WTC11 (cell line): ENCODE measurements at regions of chr1 and their contacts with region 1.

Region 1: DNA sequence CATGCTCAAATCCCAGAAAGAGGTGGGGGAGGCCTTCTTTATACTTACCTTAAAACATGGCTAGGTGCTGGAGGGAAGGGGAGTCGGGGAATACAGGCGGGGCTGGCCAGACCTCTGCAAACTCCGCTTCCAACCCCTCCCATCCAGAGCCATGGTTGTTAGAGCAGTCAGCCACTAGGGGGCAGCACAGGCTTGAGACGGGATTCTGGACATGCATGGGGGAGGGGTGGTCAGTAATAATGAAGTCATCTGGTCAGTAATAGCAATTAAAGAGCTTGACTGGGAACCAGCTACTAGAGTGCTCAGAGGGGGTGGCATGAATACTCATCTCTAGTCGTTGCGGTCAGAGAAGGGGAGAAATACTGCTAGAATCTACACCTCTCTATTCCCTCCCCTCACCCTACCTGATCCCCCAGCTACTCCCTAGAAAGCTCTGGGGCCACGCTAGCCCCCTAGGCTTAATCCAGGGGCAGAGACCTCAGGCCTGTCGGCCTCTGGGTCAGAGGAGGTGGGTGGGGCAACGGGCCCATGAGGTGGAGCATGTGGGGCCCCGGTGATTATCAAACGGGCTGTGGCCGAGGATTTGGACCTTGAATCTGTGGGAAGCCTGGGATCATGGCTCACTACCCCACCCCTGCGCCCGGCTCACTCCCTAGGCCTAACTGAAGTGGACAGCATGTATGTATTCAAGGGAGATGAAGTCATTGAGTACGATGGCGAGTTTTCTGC is 2.9 kb downstream of the CASQ1 start:
- DNase-seq: peak; percentile 96
- ATAC-seq: peak; percentile 88
- H3K4me3 Mint-ChIP-seq: no peak overlapping the region
- H3K27ac Mint-ChIP-seq: no peak overlapping the region
- H3K4me1 Mint-ChIP-seq: peaks cover 13% of the 10 kb centered on the region
- H3K27me3 Mint-ChIP-seq: no peaks in the 10 kb centered on the region; the same call in 1 of the 2 replicates
- CTCF ChIP-seq: peak; percentile 95

Region 2: GRCh38 chr1:159712080-159712479 is 481.2 kb before region 1 on chr1:
- CTCF ChIA-PET with region 1: no interaction called
- POLR2A ChIA-PET with region 1: no interaction called
- DNase-seq: no peak
- ATAC-seq: no peak
- H3K4me3 Mint-ChIP-seq: no peak overlapping the region
- H3K27ac Mint-ChIP-seq: no peak overlapping the region
- H3K4me1 Mint-ChIP-seq: no peaks in the 10 kb centered on the region
- H3K27me3 Mint-ChIP-seq: no peaks in the 10 kb centered on the region
- CTCF ChIP-seq: no peak

Region 3: DNA sequence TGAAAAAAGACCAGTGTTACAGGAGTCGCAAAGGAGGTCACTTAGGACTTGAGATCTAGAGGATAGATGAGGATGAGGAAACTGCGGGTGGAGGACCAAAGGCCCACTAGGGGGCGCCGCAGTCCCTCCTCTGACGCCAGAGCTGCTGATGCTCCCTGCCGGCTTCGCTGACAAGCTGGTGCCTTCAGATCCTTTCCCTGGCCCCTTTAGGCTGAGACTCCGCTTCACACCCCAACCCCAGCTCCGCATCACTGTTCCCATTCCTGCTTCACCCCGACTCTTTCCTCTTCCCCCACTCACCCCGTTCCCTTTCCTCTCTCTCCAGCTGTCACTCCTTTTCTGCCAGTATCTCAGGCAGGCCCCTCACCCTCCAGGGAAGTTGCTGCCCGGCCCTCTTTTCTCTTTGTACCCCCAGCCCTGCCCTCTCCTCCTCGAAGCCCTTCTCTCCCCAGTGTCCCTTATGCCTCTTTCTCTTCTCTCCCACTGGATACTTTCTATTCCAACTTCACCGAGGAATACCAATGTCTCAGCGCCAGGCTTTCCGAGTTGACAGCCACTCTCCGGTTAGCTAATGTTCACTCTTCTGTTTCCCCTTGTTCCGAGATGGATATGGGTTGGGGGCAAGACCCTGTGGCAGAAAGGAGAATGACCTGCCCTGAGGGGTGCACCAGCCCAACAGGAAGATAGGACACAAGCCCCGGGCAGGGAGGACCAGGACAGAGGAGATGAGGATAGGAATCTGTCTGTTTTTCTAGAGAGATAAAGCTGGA is 107.4 kb before region 1 on chr1:
- CTCF ChIA-PET with region 1: interaction called, 17 read pairs
- POLR2A ChIA-PET with region 1: no interaction called
- DNase-seq: peak; percentile 94
- ATAC-seq: peak; percentile 74
- H3K4me3 Mint-ChIP-seq: no peak overlapping the region
- H3K27ac Mint-ChIP-seq: no peak overlapping the region
- H3K4me1 Mint-ChIP-seq: peaks cover 19% of the 10 kb centered on the region
- H3K27me3 Mint-ChIP-seq: peaks cover 51% of the 10 kb centered on the region
- CTCF ChIP-seq: peak; percentile 92

Region 4: GRCh38 chr1:160161965-160162705 is 31.1 kb before region 1 on chr1:
- CTCF ChIA-PET with region 1: interaction called, 58 read pairs
- POLR2A ChIA-PET with region 1: interaction called, 4 read pairs
- DNase-seq: peak; percentile 78
- ATAC-seq: peak; percentile 98
- H3K4me3 Mint-ChIP-seq: no peak overlapping the region
- H3K27ac Mint-ChIP-seq: no peak overlapping the region
- H3K4me1 Mint-ChIP-seq: peaks cover 20% of the 10 kb centered on the region
- H3K27me3 Mint-ChIP-seq: peaks cover 14% of the 10 kb centered on the region
- CTCF ChIP-seq: peak; percentile 59

Region 5: GRCh38 chr1:160205242-160206035 is 12.2 kb after region 1 on chr1 and contains the start of gene PEA15:
- CTCF ChIA-PET with region 1: interaction called, 85 read pairs
- POLR2A ChIA-PET with region 1: interaction called, 3 read pairs
- DNase-seq: peak; percentile 81
- ATAC-seq: peak; percentile 56
- H3K4me3 Mint-ChIP-seq: peak within 1 kb of the TSS; percentile 77
- H3K27ac Mint-ChIP-seq: no peak within 1 kb of the TSS
- H3K4me1 Mint-ChIP-seq: peaks cover 55% of the 10 kb centered on the region
- H3K27me3 Mint-ChIP-seq: no peaks in the 10 kb centered on the region; the same call in 1 of the 2 replicates
- CTCF ChIP-seq: no peak
- total RNA-seq, gene PEA15: 43.6 to 56.3 TPM (median 46.9 TPM) in 3 replicates

Region 6: DNA sequence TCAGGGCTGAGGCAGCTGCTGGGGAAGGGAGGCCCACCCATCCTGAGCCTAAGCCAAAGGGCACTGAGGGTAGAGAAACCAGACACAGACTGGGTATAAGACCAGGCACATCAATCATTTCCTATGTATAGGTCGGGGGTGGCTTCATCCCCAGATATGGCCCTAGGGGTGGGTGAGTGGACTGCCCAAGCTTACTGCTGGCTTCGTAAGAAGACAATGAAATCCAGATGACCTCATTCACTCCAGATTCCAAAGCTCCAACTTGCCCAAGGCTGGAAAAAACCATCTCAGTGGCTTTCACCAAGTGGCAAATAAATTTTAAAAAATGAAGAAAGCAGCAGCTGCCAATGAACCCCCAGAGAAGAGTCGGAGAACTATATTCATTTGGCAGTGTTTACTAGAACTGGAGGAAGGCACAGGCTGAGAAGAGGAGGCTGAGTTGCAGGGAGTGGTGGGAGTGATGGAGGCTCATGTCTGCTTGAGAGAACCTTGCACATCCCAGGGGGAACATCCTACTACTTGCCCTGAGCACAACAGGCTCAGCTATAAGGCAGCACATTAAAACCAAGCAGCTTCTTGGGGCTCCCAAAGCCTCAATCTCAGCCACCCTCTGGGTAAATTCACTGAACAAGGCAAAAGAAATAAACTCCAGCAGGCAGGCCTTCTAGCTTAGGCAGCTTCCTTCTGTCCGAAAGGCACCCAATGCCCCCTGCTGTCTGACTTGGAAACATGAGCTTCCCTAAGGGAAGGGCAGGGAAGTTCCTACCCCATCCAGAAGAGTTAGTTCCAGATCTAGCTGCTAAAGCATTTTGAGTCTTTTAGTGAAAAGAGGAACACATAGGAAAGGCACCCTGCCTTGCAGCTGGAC is 26.0 kb after region 1 on chr1:
- CTCF ChIA-PET with region 1: interaction called, 124 read pairs
- POLR2A ChIA-PET with region 1: interaction called, 3 read pairs
- DNase-seq: peak; percentile 69
- ATAC-seq: peak; percentile 87
- H3K4me3 Mint-ChIP-seq: no peak overlapping the region
- H3K27ac Mint-ChIP-seq: peak overlapping the region; percentile 79
- H3K4me1 Mint-ChIP-seq: peaks cover 15% of the 10 kb centered on the region
- H3K27me3 Mint-ChIP-seq: no peaks in the 10 kb centered on the region
- CTCF ChIP-seq: no peak

Region 7: GRCh38 chr1:160261893-160262794 is 68.9 kb after region 1 on chr1 and contains the start of gene DCAF8:
- CTCF ChIA-PET with region 1: interaction called, 17 read pairs
- POLR2A ChIA-PET with region 1: no interaction called
- DNase-seq: peak; percentile 99
- ATAC-seq: peak; percentile 96
- H3K4me3 Mint-ChIP-seq: peak within 1 kb of the TSS; percentile 98
- H3K27ac Mint-ChIP-seq: peak within 1 kb of the TSS; percentile 99
- H3K4me1 Mint-ChIP-seq: peaks cover 32% of the 10 kb centered on the region
- H3K27me3 Mint-ChIP-seq: peaks cover 7% of the 10 kb centered on the region; the same call in 1 of the 2 replicates
- CTCF ChIP-seq: no peak
- total RNA-seq, gene DCAF8: 121 to 143 TPM (median 128 TPM) in 3 replicates

Region 8: DNA sequence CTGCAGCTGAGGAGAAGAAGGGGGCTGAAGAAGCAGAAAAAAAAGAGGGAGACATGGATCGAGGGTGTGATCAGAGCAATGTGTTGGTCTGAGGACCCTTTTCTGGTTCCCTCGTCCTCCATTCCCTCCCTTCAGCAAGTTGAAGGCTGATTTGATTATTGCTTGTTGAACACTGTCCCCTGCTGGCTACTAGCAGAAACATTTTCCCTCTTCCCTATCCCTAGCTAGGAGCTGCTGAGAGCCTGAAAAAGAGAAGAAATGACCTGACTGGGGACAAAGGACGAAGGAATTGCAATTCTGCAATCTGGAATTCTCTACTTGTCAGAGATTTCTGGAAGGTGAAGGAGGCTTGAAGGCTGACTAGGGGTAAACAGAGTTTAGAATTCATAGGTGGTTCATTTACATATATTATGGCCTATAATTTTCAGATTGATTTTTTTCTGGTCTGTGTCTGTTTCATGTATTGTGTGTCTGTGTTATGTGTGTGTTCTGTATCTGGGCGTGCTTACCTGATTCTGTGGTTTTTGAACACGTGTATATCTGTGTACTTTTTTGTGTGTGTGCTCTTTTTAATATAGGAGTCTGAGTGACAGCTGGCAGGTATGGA is 183.4 kb after region 1 on chr1:
- CTCF ChIA-PET with region 1: interaction called, 17 read pairs
- POLR2A ChIA-PET with region 1: no interaction called
- DNase-seq: no peak
- ATAC-seq: peak; percentile 71
- H3K4me3 Mint-ChIP-seq: peak overlapping the region; percentile 49
- H3K27ac Mint-ChIP-seq: no peak overlapping the region
- H3K4me1 Mint-ChIP-seq: peaks cover 35% of the 10 kb centered on the region
- H3K27me3 Mint-ChIP-seq: no peaks in the 10 kb centered on the region
- CTCF ChIP-seq: peak; percentile 61